B cell (primary cell): ENCODE measurements at regions of chr10 and their contacts with region 1.

Region 1: DNA sequence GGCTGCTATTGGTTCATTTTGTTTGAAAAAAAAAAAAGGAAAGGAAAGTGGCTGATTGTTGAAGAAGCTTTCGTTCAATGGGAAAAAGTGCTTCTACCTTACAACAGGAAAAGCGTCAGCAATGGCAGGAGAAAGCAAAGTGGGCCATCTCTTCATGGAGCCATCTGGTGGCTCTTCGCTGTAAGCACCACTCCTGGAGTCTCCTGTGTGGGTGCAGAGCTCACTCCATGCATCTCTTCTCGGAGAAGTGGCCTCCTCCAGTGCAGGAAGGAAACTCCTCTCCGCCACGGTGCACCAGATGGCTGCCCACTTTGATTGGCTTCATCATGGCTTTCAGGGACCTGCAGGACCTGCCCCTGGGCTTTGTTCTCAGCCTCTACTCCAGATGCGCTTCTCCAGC is 250.9 kb downstream of the PTEN start:
- DNase-seq: peak; percentile 68
- ATAC-seq: peak; percentile 41
- H3K4me3 ChIP-seq: no peak overlapping the region
- H3K4me3 Mint-ChIP-seq: peak overlapping the region; percentile 66
- H3K27ac ChIP-seq: peak overlapping the region; percentile 48 to 58
- H3K27ac Mint-ChIP-seq: peak overlapping the region; percentile 86
- H3K4me1 ChIP-seq: peaks cover 91 to 94% of the 10 kb centered on the region in 2 donors
- H3K4me1 Mint-ChIP-seq: peaks cover 57% of the 10 kb centered on the region
- H3K27me3 ChIP-seq: no peaks in the 10 kb centered on the region
- H3K27me3 Mint-ChIP-seq: no peaks in the 10 kb centered on the region
- CTCF ChIP-seq: peak; percentile 48

Region 2: DNA sequence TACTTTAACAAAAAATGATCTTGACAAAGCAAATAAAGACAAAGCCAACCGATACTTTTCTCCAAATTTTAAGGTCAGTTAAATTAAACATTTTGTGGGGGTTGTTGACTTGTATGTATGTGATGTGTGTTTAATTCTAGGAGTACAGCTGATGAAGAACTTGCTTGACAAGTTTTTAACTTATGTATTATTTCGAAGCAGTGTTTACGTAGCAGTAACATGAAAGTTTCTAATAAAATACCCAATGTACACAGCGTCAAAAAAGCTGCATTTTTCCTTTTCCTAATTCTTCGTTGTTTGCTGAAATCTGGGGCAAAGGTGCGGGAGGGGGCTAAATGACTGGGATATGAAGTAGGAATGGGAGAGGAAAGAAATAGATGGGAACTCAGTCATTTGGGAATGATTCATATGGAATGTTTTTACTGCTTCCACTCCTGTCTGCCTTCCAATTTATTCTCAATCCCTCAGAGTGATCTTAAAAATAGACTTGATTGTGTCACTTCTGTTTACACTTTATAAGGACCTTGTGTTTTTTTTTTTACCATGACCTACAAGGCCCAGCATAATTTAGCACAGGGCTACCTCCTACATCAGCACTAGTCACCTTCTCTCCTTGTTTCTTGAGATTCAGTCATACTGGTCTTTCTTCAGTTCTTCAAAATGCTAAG is 153.2 kb before region 1 on chr10:
- CTCF ChIA-PET with region 1: interaction called, 10 read pairs
- POLR2A ChIA-PET with region 1: no interaction called
- intact Hi-C with region 1: loop called (anchors 10 kb)
- DNase-seq: no peak
- ATAC-seq: no peak
- H3K4me3 ChIP-seq: no peak overlapping the region
- H3K4me3 Mint-ChIP-seq: no peak overlapping the region
- H3K27ac ChIP-seq: peak overlapping the region in 1 of 2 donors; percentile 57
- H3K27ac Mint-ChIP-seq: peak overlapping the region; percentile 68
- H3K4me1 ChIP-seq: peaks cover 0 to under 1% of the 10 kb centered on the region in 2 donors
- H3K4me1 Mint-ChIP-seq: peaks cover 2% of the 10 kb centered on the region
- H3K27me3 ChIP-seq: no peaks in the 10 kb centered on the region
- H3K27me3 Mint-ChIP-seq: no peaks in the 10 kb centered on the region
- CTCF ChIP-seq: no peak

Region 3: DNA sequence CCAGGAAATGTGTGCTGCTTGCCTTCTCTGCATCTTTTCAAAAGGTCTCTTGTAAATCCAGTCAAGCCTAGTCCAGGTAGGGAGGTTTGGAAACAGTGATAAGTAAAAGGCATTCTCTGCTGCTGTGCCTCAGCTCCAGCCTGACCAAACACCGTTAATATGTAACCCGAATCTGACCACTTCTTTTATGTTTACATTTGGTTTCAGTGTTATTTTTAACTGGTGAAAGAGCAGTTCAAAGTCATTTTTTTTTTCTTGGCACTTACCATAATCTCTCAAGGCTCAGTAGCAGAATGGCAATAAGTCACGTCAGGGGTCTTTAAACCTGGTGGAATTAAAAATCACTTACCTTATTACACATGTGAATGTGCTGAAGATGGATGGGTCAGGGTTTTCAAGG is 34.2 kb before region 1 on chr10:
- CTCF ChIA-PET with region 1: interaction called, 16 read pairs
- POLR2A ChIA-PET with region 1: no interaction called
- intact Hi-C with region 1: loop called (anchors 5 kb)
- DNase-seq: no peak
- ATAC-seq: no peak
- H3K4me3 ChIP-seq: no peak overlapping the region
- H3K4me3 Mint-ChIP-seq: peak overlapping the region; percentile 9
- H3K27ac ChIP-seq: no peak overlapping the region
- H3K27ac Mint-ChIP-seq: no peak overlapping the region
- H3K4me1 ChIP-seq: peaks cover 41 to 49% of the 10 kb centered on the region in 2 donors
- H3K4me1 Mint-ChIP-seq: peaks cover 49% of the 10 kb centered on the region
- H3K27me3 ChIP-seq: no peaks in the 10 kb centered on the region
- H3K27me3 Mint-ChIP-seq: no peaks in the 10 kb centered on the region
- CTCF ChIP-seq: no peak

Region 4: DNA sequence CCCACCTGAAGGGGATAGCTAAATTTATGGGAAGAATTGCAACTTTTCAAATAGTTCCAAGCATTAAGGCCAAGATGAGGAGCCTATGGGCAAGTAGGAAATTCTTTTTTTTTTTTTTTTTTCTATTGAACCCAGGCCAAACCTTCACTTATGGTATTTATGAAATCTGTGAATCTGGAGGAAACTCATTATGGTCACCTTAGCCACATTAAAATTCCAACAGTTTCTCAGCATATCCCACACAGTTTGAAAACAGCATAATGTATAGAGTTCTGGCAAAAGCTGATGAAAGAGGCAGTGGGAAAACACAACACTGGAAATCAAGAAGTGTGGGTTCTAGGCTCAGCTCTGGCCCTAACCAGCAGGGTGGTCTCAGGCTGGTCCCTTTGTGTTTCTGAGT is 14.1 kb before region 1 on chr10:
- CTCF ChIA-PET with region 1: interaction called, 10 read pairs
- POLR2A ChIA-PET with region 1: no interaction called
- intact Hi-C with region 1: loop called (anchors 2 kb)
- DNase-seq: no peak
- ATAC-seq: no peak
- H3K4me3 ChIP-seq: no peak overlapping the region
- H3K4me3 Mint-ChIP-seq: no peak overlapping the region
- H3K27ac ChIP-seq: no peak overlapping the region
- H3K27ac Mint-ChIP-seq: no peak overlapping the region
- H3K4me1 ChIP-seq: peaks cover 14 to 23% of the 10 kb centered on the region in 2 donors
- H3K4me1 Mint-ChIP-seq: peaks cover 25% of the 10 kb centered on the region
- H3K27me3 ChIP-seq: no peaks in the 10 kb centered on the region
- H3K27me3 Mint-ChIP-seq: no peaks in the 10 kb centered on the region
- CTCF ChIP-seq: no peak